GM12878 (cell line): ENCODE measurements at regions of chr11 and their contacts with region 1.

Region 1: DNA sequence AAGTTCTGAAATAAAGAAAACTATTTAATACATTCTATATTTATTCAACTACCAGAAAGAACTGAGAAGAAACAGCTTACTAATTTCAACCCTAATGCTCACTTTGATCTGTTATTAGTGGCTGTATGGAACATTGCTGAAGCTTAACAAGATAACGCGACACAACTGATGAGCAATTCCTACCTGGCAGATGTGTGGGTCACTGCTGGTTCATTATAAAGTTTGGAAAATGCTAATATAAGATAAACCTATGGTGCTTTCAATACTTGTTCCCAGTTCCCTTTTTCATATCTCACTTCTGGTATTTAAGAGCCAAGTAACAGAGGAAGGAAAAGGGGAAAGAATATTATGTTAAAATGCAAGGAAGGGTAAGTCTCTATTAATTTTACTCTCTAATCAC is 10.5 kb downstream of the CTSC start:
- DNase-seq: no peak
- ATAC-seq: peak; percentile 44
- H3K4me3 ChIP-seq: peak overlapping the region; percentile 23; the same call in 1 of the 2 replicates
- H3K27ac ChIP-seq: peak overlapping the region; percentile 67; the same call in 1 of the 2 replicates
- H3K4me1 ChIP-seq: peaks cover 42% of the 10 kb centered on the region
- H3K27me3 ChIP-seq: no peaks in the 10 kb centered on the region
- CTCF ChIP-seq: no peak
- EP300 ChIP-seq: peak; percentile 46 to 80; a peak in 1 of 4 replicates
- POLR2A ChIP-seq: no peak
- RAD21 ChIP-seq: no peak

Region 2: GRCh38 chr11:88307749-88308425 is 19.2 kb before region 1 on chr11:
- CTCF ChIA-PET with region 1: interaction called, 5 read pairs
- POLR2A ChIA-PET with region 1: interaction called, 16 read pairs
- RAD21 ChIA-PET with region 1: interaction called, 80 read pairs
- SMC1A ChIA-PET with region 1: interaction called, 288 read pairs
- in situ Hi-C with region 1: no loop called
- intact Hi-C with region 1: loop called (anchors 2 kb)
- DNase-seq: peak; percentile 81
- ATAC-seq: peak; percentile 78
- H3K4me3 ChIP-seq: peak overlapping the region; percentile 6; the same call in 1 of the 2 replicates
- H3K27ac ChIP-seq: peak overlapping the region; percentile 75
- H3K4me1 ChIP-seq: peaks cover 33% of the 10 kb centered on the region
- H3K27me3 ChIP-seq: no peaks in the 10 kb centered on the region
- CTCF ChIP-seq: no peak
- EP300 ChIP-seq: peak; percentile 47 to 76; a peak in 3 of 4 replicates
- POLR2A ChIP-seq: no peak
- RAD21 ChIP-seq: no peak

Region 3: DNA sequence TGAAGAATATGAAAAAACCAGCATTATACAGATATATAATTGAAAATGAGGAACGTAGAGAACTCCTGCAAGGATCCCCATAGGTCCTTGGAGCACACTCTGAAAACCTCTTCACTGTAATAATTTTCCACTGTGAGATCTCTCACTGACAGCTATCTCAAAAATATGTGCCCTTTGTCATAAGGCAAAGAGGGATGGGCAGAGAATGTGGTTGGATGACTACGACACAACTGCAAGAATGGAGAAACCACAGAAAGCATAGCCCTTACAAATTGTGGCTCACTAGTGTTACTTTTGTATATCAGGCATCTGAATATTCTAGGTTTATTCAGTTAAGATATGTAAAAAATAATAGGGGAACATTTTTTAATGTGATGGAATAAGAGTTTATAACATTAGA is 18.3 kb after region 1 on chr11:
- CTCF ChIA-PET with region 1: interaction called, 9 read pairs
- POLR2A ChIA-PET with region 1: interaction called, 6 read pairs
- RAD21 ChIA-PET with region 1: interaction called, 299 read pairs
- SMC1A ChIA-PET with region 1: interaction called, 171 read pairs
- in situ Hi-C with region 1: no loop called
- intact Hi-C with region 1: no loop called
- DNase-seq: no peak
- ATAC-seq: peak; percentile 75
- H3K4me3 ChIP-seq: no peak overlapping the region
- H3K27ac ChIP-seq: no peak overlapping the region
- H3K4me1 ChIP-seq: peaks cover 18% of the 10 kb centered on the region
- H3K27me3 ChIP-seq: no peaks in the 10 kb centered on the region
- CTCF ChIP-seq: no peak
- EP300 ChIP-seq: no peak
- POLR2A ChIP-seq: no peak
- RAD21 ChIP-seq: no peak

Region 4: GRCh38 chr11:88478136-88478815 is 151.2 kb after region 1 on chr11:
- CTCF ChIA-PET with region 1: no interaction called
- POLR2A ChIA-PET with region 1: no interaction called
- RAD21 ChIA-PET with region 1: no interaction called
- SMC1A ChIA-PET with region 1: no interaction called
- in situ Hi-C with region 1: no loop called
- intact Hi-C with region 1: no loop called
- DNase-seq: no peak
- ATAC-seq: no peak
- H3K4me3 ChIP-seq: no peak overlapping the region
- H3K27ac ChIP-seq: no peak overlapping the region
- H3K4me1 ChIP-seq: no peaks in the 10 kb centered on the region
- H3K27me3 ChIP-seq: no peaks in the 10 kb centered on the region
- CTCF ChIP-seq: no peak
- EP300 ChIP-seq: no peak
- POLR2A ChIP-seq: no peak
- RAD21 ChIP-seq: no peak